Common myeloid progenitor, CD34-positive (primary cell): ENCODE measurements at regions of chr12 and their contacts with region 1.

Region 1: GRCh38 chr12:6533923-6534694 is at the start of gene GAPDH:
- DNase-seq: peak; percentile 93 to 97 (median 95)
- H3K4me3 ChIP-seq: peak within 1 kb of the TSS; percentile 83 to 96 (median 89)
- H3K27ac ChIP-seq: peak within 1 kb of the TSS; percentile 89 to 94
- H3K4me1 ChIP-seq: peaks cover 5 to 54% (median 52%) of the 10 kb centered on the region in 4 experiments
- H3K27me3 ChIP-seq: no peaks in the 10 kb centered on the region

Region 2: GRCh38 chr12:6493497-6494257 is 40.4 kb before region 1 on chr12 and contains the start of gene NCAPD2:
- CTCF ChIA-PET with region 1: interaction called, 9 read pairs
- POLR2A ChIA-PET with region 1: interaction called, 13 read pairs
- DNase-seq: peak; percentile 93 to 98 (median 97)
- H3K4me3 ChIP-seq: peak within 1 kb of the TSS; percentile 90 to 98 (median 95)
- H3K27ac ChIP-seq: peak within 1 kb of the TSS; percentile 93 to 94
- H3K4me1 ChIP-seq: peaks cover 21 to 30% (median 26%) of the 10 kb centered on the region in 4 experiments
- H3K27me3 ChIP-seq: no peaks in the 10 kb centered on the region

Region 3: DNA sequence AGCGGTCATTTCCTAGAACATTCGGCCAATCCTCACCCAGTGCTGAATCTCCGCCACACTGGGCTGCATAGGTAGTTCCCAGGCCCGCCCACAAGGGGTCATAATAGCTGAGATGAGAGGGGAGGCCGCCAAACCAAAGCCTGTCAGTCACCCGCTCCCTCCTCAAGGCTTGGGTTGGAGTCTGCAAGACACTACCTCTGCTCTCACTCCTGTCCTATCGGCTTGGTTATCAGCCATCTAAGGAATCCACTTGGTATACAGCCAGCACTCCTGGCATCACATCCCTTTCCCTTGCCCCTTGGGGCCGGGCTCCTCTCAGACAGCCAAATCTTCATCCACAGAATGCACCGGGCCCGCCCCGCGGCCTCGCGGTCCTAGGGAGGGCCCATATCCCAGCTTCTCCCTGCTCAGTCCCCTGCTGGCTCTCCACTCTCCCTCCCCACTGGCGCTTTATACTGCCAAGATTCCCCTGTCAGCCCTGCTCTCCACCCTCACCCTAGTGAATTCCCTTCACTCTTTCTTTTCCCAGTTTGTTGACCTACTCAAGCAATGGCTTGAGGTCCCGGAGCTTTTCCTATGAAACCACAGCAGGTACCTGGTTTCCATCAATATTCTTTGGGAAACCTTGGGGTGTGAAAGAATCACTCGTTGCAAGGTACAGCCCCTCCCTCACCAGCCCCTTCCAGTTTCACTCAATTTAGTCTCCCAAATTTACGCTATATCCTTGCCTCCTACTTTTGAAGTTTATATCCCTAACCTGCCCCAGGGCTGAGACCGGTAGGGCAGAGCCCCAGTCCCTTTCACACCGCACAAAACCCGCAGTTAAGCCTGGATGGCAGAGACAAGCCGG is 20.3 kb after region 1 on chr12:
- CTCF ChIA-PET with region 1: interaction called, 122 read pairs
- POLR2A ChIA-PET with region 1: interaction called, 4 read pairs
- DNase-seq: peak; percentile 72 to 85 (median 85)
- H3K4me3 ChIP-seq: peak overlapping the region; percentile 0 to 94 (median 85)
- H3K27ac ChIP-seq: no peak overlapping the region
- H3K4me1 ChIP-seq: peaks cover 2 to 52% (median 35%) of the 10 kb centered on the region in 4 experiments
- H3K27me3 ChIP-seq: no peaks in the 10 kb centered on the region

Region 4: DNA sequence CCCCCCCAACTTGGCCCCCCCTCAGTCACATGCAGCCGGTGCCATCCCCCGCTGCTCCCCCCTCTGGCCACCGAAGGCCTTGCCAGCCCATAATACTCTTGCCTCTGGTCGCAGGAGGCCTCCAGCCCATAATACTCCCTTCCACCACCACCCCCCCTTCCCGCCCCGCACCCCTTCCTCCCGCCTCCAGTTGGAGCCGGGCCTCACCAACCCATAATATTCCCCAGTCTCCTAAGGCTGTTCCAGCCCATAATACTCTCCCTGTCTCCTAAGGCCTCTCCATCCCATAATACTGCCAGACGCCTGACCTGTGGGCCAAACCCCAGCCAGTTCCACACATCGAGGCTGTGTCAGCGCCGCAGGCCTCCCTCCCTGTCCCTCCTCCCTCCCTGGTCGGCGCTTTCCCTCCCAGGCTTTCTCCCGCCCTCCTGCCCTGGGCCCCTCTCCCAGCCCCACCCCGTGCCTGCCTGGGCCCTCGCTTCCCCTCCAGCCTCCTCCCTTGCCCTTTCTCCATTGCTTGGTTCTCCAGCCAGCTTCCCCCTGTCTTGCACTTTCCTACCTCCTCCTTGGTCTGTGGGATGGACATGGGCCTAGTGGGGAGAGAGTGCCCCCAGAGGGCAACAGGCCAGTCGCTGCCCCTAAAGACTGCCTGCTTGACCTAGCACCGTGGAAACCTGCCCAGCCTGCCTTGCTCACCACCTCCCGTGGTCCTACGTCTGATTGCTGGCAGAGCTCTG is 79.8 kb after region 1 on chr12:
- CTCF ChIA-PET with region 1: no interaction called
- POLR2A ChIA-PET with region 1: no interaction called
- DNase-seq: peak; percentile 96 to 99 (median 98)
- H3K4me3 ChIP-seq: no peak overlapping the region
- H3K27ac ChIP-seq: peak overlapping the region in 1 of 2 experiments; percentile 72
- H3K4me1 ChIP-seq: peaks cover 16 to 65% (median 49%) of the 10 kb centered on the region in 4 experiments
- H3K27me3 ChIP-seq: no peaks in the 10 kb centered on the region

Region 5: GRCh38 chr12:6839482-6840201 is 305.5 kb after region 1 on chr12:
- CTCF ChIA-PET with region 1: no interaction called
- POLR2A ChIA-PET with region 1: no interaction called
- DNase-seq: no peak
- H3K4me3 ChIP-seq: no peak overlapping the region
- H3K27ac ChIP-seq: no peak overlapping the region
- H3K4me1 ChIP-seq: peaks cover 0 to 2% (median 0%) of the 10 kb centered on the region in 4 experiments
- H3K27me3 ChIP-seq: no peaks in the 10 kb centered on the region